Activated CD4-positive, alpha-beta memory T cell treated with anti-CD3 and anti-CD28 coated beads for 36 hours (primary cell): ENCODE measurements at regions of chr14 and their contacts with region 1.

Region 1: GRCh38 chr14:60248697-60249318 is at the start of gene PPM1A:
- DNase-seq: peak; percentile 97
- H3K4me3 Mint-ChIP-seq: peak within 1 kb of the TSS; percentile 94
- H3K27ac Mint-ChIP-seq: peak within 1 kb of the TSS; percentile 100
- H3K4me1 Mint-ChIP-seq: peaks cover 50% of the 10 kb centered on the region
- H3K27me3 Mint-ChIP-seq: no peaks in the 10 kb centered on the region
- total RNA-seq, gene PPM1A: 44.0 to 47.3 TPM

Region 2: GRCh38 chr14:59483900-59484638 is 764.7 kb before region 1 on chr14 and contains the starts of genes JKAMP and L3HYPDH:
- CTCF ChIA-PET with region 1: no interaction called
- POLR2A ChIA-PET with region 1: interaction called, 7 read pairs
- intact Hi-C with region 1: loop called (anchors 10 kb)
- DNase-seq: peak; percentile 98
- H3K4me3 Mint-ChIP-seq: peak within 1 kb of the TSS; percentile 92
- H3K27ac Mint-ChIP-seq: peak within 1 kb of the TSS; percentile 86
- H3K4me1 Mint-ChIP-seq: peaks cover 57% of the 10 kb centered on the region
- H3K27me3 Mint-ChIP-seq: no peaks in the 10 kb centered on the region
- total RNA-seq, gene JKAMP: 21.0 to 26.4 TPM
- total RNA-seq, gene L3HYPDH: 7.8 to 7.9 TPM

Region 3: GRCh38 chr14:60091550-60092530 is 157.0 kb before region 1 on chr14 and contains the start of gene PCNX4:
- CTCF ChIA-PET with region 1: no interaction called
- POLR2A ChIA-PET with region 1: interaction called, 17 read pairs
- intact Hi-C with region 1: loop called (anchors 1 kb)
- DNase-seq: peak; percentile 95
- H3K4me3 Mint-ChIP-seq: peak within 1 kb of the TSS; percentile 95
- H3K27ac Mint-ChIP-seq: peak within 1 kb of the TSS; percentile 91
- H3K4me1 Mint-ChIP-seq: peaks cover 30% of the 10 kb centered on the region
- H3K27me3 Mint-ChIP-seq: no peaks in the 10 kb centered on the region
- total RNA-seq, gene PCNX4: 26.3 to 26.9 TPM

Region 4: DNA sequence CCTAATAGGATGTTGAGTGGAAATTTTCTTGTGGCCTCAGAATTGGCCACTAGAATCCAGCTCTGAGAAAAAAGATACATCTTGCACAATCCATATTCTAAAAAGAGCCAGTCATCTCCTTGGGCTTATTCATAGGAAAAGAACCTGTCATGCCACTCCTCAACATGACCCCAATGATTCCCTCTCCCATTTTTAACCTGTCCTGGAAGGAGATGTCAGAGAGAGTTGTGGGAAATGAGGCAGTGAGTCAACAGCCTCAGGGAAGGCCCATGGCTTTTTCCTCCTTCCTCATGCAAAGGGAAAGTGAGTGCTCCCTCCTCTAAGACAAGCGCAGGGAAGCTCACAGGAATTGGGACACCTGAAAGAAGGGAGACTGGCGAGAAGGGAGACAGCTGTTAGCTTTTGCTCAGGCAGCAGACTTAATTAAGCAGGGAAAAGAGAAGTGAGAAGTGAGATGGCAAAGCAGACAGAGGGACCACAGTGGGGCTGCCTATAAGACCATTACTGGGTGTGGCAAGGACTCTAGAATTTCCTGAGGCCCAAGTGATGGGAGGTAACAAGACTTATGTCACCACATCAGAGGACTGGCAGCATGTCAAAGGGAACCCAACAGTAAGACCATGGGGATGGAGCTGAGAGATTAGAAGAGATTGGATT is 73.4 kb before region 1 on chr14:
- CTCF ChIA-PET with region 1: no interaction called
- POLR2A ChIA-PET with region 1: no interaction called
- intact Hi-C with region 1: no loop called
- DNase-seq: no peak
- H3K4me3 Mint-ChIP-seq: no peak overlapping the region
- H3K27ac Mint-ChIP-seq: no peak overlapping the region
- H3K4me1 Mint-ChIP-seq: no peaks in the 10 kb centered on the region
- H3K27me3 Mint-ChIP-seq: peaks cover 3% of the 10 kb centered on the region

Region 5: DNA sequence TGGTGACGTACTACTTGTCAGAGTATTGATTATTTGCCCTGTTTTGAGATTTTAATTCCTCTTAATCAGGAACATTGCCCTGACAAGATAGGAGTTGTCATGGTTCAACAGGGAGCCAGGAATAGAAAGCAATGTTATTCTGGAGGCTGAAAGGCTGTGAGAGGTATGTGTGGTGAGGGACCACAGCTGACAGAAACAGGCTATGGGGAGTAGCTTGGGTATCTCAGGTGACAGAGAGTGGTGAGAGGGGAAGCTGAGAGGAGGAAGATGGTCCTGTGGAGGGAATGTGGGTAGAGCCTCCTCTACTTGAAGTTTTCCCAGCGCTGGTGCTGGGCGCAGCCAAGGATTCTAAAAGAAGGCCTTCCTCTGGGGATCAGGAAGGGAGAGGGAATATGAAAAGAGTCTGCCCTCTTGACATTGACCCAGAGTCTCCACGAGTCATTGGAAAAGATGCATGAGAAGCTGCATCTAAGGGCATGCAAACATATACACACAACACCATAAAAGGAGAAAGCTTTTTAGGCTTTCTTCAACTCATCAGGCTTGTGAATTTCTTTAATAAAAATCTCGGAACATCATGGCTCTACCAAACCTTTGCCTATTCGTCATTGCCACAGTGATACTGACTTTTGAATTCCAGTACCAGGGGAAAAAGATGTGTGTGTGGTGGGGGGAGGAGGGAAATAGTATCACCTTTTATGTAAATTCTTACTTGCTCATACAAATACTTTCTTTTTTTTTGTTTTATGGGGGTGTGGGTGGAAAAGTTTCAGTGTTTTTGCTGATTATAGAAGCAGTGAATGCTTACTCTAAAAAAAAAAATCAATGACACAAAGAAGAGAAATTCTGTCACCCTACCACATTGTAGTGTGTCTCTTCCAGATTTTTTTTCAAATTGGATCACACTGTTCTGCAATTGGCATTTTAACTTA is 43.7 kb before region 1 on chr14:
- CTCF ChIA-PET with region 1: no interaction called
- POLR2A ChIA-PET with region 1: no interaction called
- intact Hi-C with region 1: loop called (anchors 1 kb)
- DNase-seq: no peak
- H3K4me3 Mint-ChIP-seq: no peak overlapping the region
- H3K27ac Mint-ChIP-seq: no peak overlapping the region
- H3K4me1 Mint-ChIP-seq: peaks cover 20% of the 10 kb centered on the region
- H3K27me3 Mint-ChIP-seq: peaks cover 20% of the 10 kb centered on the region

Region 6: GRCh38 chr14:60227291-60227690 is 21.5 kb before region 1 on chr14:
- CTCF ChIA-PET with region 1: no interaction called
- POLR2A ChIA-PET with region 1: no interaction called
- intact Hi-C with region 1: no loop called
- DNase-seq: no peak
- H3K4me3 Mint-ChIP-seq: no peak overlapping the region
- H3K27ac Mint-ChIP-seq: no peak overlapping the region
- H3K4me1 Mint-ChIP-seq: no peaks in the 10 kb centered on the region
- H3K27me3 Mint-ChIP-seq: no peaks in the 10 kb centered on the region

Region 7: GRCh38 chr14:60331201-60332045 is 82.6 kb after region 1 on chr14:
- CTCF ChIA-PET with region 1: interaction called, 23 read pairs
- POLR2A ChIA-PET with region 1: interaction called, 18 read pairs
- intact Hi-C with region 1: loop called (anchors 1 kb)
- DNase-seq: peak; percentile 85
- H3K4me3 Mint-ChIP-seq: peak overlapping the region; percentile 84
- H3K27ac Mint-ChIP-seq: peak overlapping the region; percentile 85
- H3K4me1 Mint-ChIP-seq: peaks cover 37% of the 10 kb centered on the region
- H3K27me3 Mint-ChIP-seq: peaks cover 36% of the 10 kb centered on the region

Region 8: DNA sequence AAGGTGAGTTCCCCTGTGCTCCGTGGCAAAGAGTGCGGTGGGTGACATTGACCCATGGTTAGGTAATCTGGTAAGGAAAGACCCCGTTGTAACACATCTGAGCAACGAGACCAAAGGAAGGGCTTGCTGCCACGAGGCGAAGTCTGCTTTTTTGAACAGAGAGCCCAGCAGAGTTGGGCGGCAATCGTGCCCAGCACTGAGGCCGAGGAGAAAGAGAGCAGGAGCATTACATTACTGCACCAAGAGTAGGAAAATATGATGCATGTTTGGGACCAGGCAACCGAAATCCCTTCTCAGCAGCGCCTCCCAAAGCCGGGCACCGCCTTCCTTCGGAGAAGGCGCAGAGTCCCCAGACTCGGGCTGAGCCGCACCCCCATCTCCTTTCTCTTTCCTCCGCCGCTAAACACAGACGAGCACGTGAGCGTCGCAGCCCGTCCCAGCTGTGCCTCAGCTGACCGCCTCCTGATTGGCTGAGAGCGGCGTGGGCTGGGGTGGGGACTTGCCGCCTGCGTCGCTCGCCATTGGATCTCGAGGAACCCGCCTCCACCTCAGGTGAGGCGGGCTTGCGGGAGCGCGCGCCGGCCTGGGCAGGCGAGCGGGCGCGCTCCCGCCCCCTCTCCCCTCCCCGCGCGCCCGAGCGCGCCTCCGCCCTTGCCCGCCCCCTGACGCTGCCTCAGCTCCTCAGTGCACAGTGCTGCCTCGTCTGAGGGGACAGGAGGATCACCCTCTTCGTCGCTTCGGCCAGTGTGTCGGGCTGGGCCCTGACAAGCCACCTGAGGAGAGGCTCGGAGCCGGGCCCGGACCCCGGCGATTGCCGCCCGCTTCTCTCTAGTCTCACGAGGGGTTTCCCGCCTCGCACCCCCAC is 1446.3 kb after region 1 on chr14 and contains the start of gene HIF1A:
- CTCF ChIA-PET with region 1: no interaction called
- POLR2A ChIA-PET with region 1: no interaction called
- intact Hi-C with region 1: loop called (anchors 1 kb)
- DNase-seq: peak; percentile 99
- H3K4me3 Mint-ChIP-seq: peak within 1 kb of the TSS; percentile 98
- H3K27ac Mint-ChIP-seq: peak within 1 kb of the TSS; percentile 98
- H3K4me1 Mint-ChIP-seq: peaks cover 49% of the 10 kb centered on the region
- H3K27me3 Mint-ChIP-seq: no peaks in the 10 kb centered on the region
- total RNA-seq, gene HIF1A: 283 to 287 TPM